CD4-positive, alpha-beta memory T cell (primary cell): ENCODE measurements at regions of chr13 and their contacts with region 1.

Region 1: DNA sequence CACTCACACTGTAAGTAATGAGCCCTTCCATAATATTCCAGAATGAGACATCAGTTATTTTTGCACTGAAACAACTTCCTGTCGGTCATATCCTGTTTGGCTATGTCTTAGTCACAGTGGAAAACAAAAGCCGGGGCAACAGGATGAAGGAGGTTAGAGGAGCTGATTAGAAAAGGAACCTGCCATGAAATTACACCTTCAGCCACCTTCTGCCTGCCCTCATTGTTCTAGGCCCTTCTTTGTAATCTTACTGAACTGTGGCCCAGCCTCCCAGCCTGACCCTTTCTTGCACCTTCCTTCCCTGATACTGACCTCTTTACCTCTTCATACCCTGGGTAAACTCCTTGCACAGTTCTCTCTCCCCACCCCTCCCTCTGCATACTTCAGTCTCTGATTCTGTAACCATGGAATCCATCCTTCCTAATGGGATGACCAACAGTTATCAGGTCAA is 67.3 kb downstream of the DOCK9 start:
- DNase-seq: peak; percentile 30 to 72 (median 34)
- H3K4me3 ChIP-seq: no peak overlapping the region
- H3K4me3 Mint-ChIP-seq: peak overlapping the region in 7 of 8 donors; percentile 35 to 81 (median 48)
- H3K27ac ChIP-seq: peak overlapping the region; percentile 17
- H3K27ac Mint-ChIP-seq: peak overlapping the region; percentile 62 to 97 (median 92)
- H3K4me1 ChIP-seq: peaks cover 15% of the 10 kb centered on the region
- H3K4me1 Mint-ChIP-seq: peaks cover 17 to 44% (median 31%) of the 10 kb centered on the region in 4 donors
- H3K27me3 ChIP-seq: no peaks in the 10 kb centered on the region
- H3K27me3 Mint-ChIP-seq: no peaks in the 10 kb centered on the region

Region 2: GRCh38 chr13:99004978-99005377 is 94.5 kb after region 1 on chr13:
- CTCF ChIA-PET with region 1: no interaction called
- POLR2A ChIA-PET with region 1: no interaction called
- intact Hi-C with region 1: loop called (anchors 5 kb)
- DNase-seq: no peak
- H3K4me3 ChIP-seq: no peak overlapping the region
- H3K4me3 Mint-ChIP-seq: no peak overlapping the region
- H3K27ac ChIP-seq: no peak overlapping the region
- H3K27ac Mint-ChIP-seq: peak overlapping the region in 3 of 7 donors; percentile 11 to 29 (median 22)
- H3K4me1 ChIP-seq: peaks cover 58% of the 10 kb centered on the region
- H3K4me1 Mint-ChIP-seq: peaks cover 52 to 79% (median 66%) of the 10 kb centered on the region in 4 donors
- H3K27me3 ChIP-seq: no peaks in the 10 kb centered on the region
- H3K27me3 Mint-ChIP-seq: no peaks in the 10 kb centered on the region